Activated T-helper 1 cell treated with anti-CD3 and anti-CD28 coated beads, Interleukin-12 subunit alpha, Interleukin-12 subunit beta, Interleukin-2, Interleukin-4 antibody, amounts not matched to agents 30 ng/mL and 10 ng/mL and 1 ng/mL, durations not matched to agents 14 hours and 24 hours and 36 hours (primary cell): ENCODE measurements at regions of chr6 and their contacts with region 1.

Region 1: DNA sequence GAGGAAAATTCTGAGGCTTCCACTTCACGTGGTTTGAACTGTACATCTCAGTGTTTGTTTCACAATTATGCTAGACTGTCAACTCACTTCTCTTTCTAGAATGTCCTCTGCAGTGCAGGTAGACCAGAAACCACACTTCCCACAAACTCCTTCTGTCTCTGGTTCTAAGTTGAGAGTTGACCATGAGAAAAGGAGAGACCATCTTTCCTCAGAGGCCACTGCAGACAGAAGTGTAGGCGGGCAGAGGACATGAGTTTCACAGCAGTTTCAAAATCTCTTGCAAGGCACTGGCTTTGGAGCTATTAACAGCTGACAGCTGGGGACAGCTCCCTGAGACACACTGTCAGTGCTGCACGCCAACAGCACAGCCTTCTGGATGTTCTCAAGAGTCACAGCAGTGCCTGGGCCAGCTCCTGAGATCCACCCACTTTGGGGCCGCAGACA is 55.4 kb upstream of the MOXD1 start:
- DNase-seq: no peak
- H3K4me3 Mint-ChIP-seq: no peak overlapping the region
- H3K27ac Mint-ChIP-seq: no peak overlapping the region
- H3K4me1 Mint-ChIP-seq: no peaks in the 10 kb centered on the region
- H3K27me3 Mint-ChIP-seq: no peaks in the 10 kb centered on the region

Region 2: DNA sequence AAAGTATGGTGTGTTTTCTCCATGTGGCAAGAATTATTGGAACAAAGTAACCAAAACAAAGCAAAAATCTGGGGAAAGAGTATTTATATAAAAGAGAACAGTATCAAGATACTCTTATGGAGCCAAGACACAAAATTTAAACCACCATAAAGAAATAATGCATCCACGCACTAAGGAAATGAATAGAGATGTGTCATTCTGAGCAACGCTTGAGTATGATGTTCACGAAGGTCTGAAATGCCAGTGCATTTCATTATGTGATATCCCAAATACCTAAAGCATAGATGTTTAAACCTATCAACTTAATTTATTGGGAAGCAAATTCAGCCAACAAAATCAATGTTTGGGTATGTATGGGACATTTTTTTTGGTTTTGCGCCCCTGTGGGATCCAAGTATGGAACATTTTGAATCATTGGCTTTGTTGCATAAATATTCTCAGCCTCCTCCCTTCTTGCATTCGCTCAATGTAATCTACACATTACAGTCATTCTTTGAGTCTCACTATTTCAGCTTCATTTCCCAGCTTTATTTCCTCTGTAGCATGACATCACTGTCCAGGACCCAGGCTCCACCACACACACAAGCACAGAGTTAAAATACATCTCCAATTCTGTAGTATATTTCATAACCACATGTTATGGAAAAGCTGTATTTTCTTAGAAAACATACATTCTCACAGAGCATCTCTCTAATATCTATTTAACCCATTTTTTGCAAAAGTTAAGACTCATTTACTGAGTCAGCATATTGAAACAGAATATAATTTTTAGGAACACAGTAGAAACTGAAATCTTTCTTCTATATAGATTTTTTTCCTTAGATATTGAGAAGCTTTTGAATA is 43.8 kb before region 1 on chr6:
- intact Hi-C with region 1: loop called (anchors 1 kb)
- DNase-seq: no peak
- H3K4me3 Mint-ChIP-seq: no peak overlapping the region
- H3K27ac Mint-ChIP-seq: no peak overlapping the region
- H3K4me1 Mint-ChIP-seq: no peaks in the 10 kb centered on the region
- H3K27me3 Mint-ChIP-seq: peaks cover 9% of the 10 kb centered on the region

Region 3: GRCh38 chr6:132687306-132687705 is 230.6 kb after region 1 on chr6:
- intact Hi-C with region 1: no loop called
- DNase-seq: no peak
- H3K4me3 Mint-ChIP-seq: no peak overlapping the region
- H3K27ac Mint-ChIP-seq: no peak overlapping the region
- H3K4me1 Mint-ChIP-seq: no peaks in the 10 kb centered on the region
- H3K27me3 Mint-ChIP-seq: peaks cover 42% of the 10 kb centered on the region

Region 4: DNA sequence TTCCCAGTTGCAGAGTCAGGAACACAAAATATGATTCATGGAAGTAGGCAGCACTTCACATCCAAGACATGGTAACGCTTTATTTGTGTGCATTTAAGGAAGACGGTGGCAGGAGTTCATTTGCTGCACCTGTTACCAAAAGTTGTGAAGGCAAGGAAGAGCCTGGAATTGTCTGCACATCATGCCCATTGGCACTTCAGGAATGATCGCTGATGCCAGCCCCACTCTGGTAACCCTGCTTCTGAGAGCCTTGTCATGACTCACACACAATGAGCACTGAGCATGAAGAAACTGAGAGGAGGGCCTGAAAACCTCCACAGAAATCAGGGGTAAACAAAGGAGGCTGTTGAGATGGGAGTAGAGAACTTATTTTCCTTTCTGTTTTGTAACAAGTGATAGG is 538.7 kb after region 1 on chr6:
- intact Hi-C with region 1: no loop called
- DNase-seq: no peak
- H3K4me3 Mint-ChIP-seq: no peak overlapping the region
- H3K27ac Mint-ChIP-seq: no peak overlapping the region
- H3K4me1 Mint-ChIP-seq: no peaks in the 10 kb centered on the region
- H3K27me3 Mint-ChIP-seq: peaks cover 1% of the 10 kb centered on the region